WTC11 (cell line): ENCODE measurements at regions of chr2 and their contacts with region 1.

Region 1: DNA sequence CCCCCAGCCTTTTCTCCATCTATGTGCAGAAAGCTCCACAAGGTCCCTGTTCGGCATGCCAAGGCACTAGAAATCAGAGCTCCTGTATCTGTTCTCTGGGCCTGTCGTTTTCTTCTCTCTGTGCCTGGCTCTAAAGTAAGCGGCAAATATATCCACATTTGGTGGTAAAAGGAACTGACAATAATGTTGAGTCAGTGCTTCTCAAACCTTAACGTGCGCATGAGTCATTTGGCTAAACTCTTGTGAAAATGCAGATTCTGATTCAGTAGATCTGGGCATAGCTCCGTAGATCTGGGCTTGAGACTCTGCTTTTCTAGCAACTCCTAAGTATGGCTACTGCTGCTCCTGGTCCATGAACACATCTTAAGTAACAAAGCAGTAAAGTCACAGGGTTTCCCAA is 16.5 kb upstream of the ACSL3 start:
- DNase-seq: no peak
- ATAC-seq: no peak
- H3K4me3 Mint-ChIP-seq: no peak overlapping the region
- H3K27ac Mint-ChIP-seq: no peak overlapping the region
- H3K4me1 Mint-ChIP-seq: no peaks in the 10 kb centered on the region
- H3K27me3 Mint-ChIP-seq: no peaks in the 10 kb centered on the region
- CTCF ChIP-seq: no peak

Region 2: DNA sequence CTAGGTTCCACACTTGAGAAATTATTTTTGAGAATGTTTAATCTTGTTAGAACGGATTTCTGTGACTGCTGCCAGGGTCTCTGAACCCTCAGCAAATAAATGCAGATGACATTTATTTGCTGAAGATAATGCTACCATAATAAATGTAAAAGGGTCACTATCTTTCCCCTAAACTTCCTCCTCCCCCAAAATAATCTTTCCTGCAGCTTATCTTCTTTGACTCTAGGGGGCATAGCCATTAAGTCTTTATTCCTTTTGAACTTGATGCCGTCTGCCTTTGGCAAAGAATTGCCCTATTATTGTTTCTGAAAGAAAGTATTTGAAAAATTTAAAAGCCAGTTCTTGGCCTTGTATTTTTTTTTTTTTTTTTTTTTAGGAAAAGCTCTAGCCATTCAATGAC is 47.1 kb before region 1 on chr2:
- CTCF ChIA-PET with region 1: interaction called, 10 read pairs
- POLR2A ChIA-PET with region 1: no interaction called
- DNase-seq: no peak
- ATAC-seq: peak; percentile 37; the same call in 1 of the 2 replicates
- H3K4me3 Mint-ChIP-seq: no peak overlapping the region
- H3K27ac Mint-ChIP-seq: no peak overlapping the region
- H3K4me1 Mint-ChIP-seq: peaks cover 28% of the 10 kb centered on the region
- H3K27me3 Mint-ChIP-seq: no peaks in the 10 kb centered on the region
- CTCF ChIP-seq: no peak

Region 3: GRCh38 chr2:223238301-223238700 is 394.0 kb after region 1 on chr2:
- CTCF ChIA-PET with region 1: no interaction called
- POLR2A ChIA-PET with region 1: no interaction called
- DNase-seq: no peak
- ATAC-seq: no peak
- H3K4me3 Mint-ChIP-seq: no peak overlapping the region
- H3K27ac Mint-ChIP-seq: no peak overlapping the region
- H3K4me1 Mint-ChIP-seq: no peaks in the 10 kb centered on the region
- H3K27me3 Mint-ChIP-seq: no peaks in the 10 kb centered on the region; the same call in 1 of the 2 replicates
- CTCF ChIP-seq: no peak